GM12878 (cell line): ENCODE measurements at regions of chr5 and their contacts with region 1.

Region 1: GRCh38 chr5:95620870-95621837 is 1.3 kb downstream of the GPR150 start:
- DNase-seq: no peak
- ATAC-seq: peak; percentile 61
- H3K4me3 ChIP-seq: peak overlapping the region; percentile 62; the same call in 1 of the 2 replicates
- H3K27ac ChIP-seq: peak overlapping the region; percentile 21; the same call in 1 of the 2 replicates
- H3K4me1 ChIP-seq: peaks cover 19% of the 10 kb centered on the region
- H3K27me3 ChIP-seq: peaks cover 0 to 2% of the 10 kb centered on the region in 2 experiments; a peak in 1 of 4 replicates
- CTCF ChIP-seq: 0 out of 6 replicates have a peak, but pooled peaks of 1 of the 3 experiments have one; percentile 6
- EP300 ChIP-seq: no peak
- POLR2A ChIP-seq: no peak; the same call in 1 of the 2 replicates
- RAD21 ChIP-seq: no peak

Region 2: DNA sequence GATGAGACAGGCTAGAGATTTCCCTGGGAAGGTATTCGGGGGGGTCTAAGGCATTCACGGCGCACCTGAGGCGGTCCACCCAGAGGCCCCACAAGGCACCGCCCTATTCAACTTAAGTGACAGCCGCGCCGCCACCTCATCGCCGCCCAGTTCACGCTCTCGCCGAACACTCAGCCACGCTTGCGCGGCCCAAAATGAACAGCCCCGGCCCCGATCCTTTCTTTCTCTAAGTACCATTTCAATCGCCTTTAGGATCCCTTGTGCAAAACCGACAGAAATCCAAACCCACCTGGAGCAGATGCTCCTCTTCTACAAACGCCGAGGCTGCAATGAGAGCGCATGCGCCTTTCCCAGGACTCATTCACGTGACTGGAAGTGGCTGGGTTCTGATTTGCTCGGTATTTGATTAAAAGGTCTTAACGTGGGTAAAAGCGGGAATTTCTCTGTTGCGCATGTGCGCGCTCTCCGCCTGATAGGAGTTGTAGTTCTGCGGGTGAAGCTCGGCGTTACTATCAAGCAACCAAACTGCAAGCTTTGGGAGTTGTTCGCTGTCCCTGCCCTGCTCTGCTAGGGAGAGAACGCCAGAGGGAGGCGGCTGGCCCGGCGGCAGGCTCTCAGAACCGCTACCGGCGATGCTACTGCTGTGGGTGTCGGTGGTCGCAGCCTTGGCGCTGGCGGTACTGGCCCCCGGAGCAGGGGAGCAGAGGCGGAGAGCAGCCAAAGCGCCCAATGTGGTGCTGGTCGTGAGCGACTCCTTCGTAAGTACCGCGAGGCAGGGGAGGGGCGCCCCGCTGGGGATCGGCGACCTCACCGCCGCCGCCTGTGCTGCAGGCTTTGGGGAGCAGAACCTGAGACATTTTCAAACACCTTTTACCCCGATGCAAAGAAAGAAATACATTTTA is 66.3 kb before region 1 on chr5 and contains the starts of genes ARSK and SKIC3:
- CTCF ChIA-PET with region 1: no interaction called
- POLR2A ChIA-PET with region 1: no interaction called
- RAD21 ChIA-PET with region 1: no interaction called
- SMC1A ChIA-PET with region 1: interaction called, 3 read pairs
- in situ Hi-C with region 1: no loop called
- intact Hi-C with region 1: loop called (anchors 1 kb)
- DNase-seq: peak; percentile 99
- ATAC-seq: peak; percentile 94
- H3K4me3 ChIP-seq: peak within 1 kb of the TSS; percentile 87
- H3K27ac ChIP-seq: peak within 1 kb of the TSS; percentile 80
- H3K4me1 ChIP-seq: peaks cover 4% of the 10 kb centered on the region; the same call in 1 of the 2 replicates
- H3K27me3 ChIP-seq: no peaks in the 10 kb centered on the region
- CTCF ChIP-seq: peak in 2 of 3 experiments; percentile 27 to 33; a peak in 4 of 6 replicates
- EP300 ChIP-seq: no peak
- POLR2A ChIP-seq: peak; percentile 91
- RAD21 ChIP-seq: no peak
- polyA plus RNA-seq, gene ARSK: 1.6 to 3.5 TPM
- polyA plus RNA-seq, gene SKIC3: 23.6 to 42.1 TPM

Region 3: GRCh38 chr5:95631991-95632675 is 11.0 kb after region 1 on chr5:
- CTCF ChIA-PET with region 1: interaction called, 7 read pairs
- POLR2A ChIA-PET with region 1: no interaction called
- RAD21 ChIA-PET with region 1: no interaction called
- SMC1A ChIA-PET with region 1: interaction called, 14 read pairs
- in situ Hi-C with region 1: no loop called
- intact Hi-C with region 1: no loop called
- DNase-seq: no peak
- ATAC-seq: peak; percentile 98
- H3K4me3 ChIP-seq: no peak overlapping the region
- H3K27ac ChIP-seq: no peak overlapping the region
- H3K4me1 ChIP-seq: peaks cover 8% of the 10 kb centered on the region; the same call in 1 of the 2 replicates
- H3K27me3 ChIP-seq: no peaks in the 10 kb centered on the region
- CTCF ChIP-seq: no peak
- EP300 ChIP-seq: no peak
- POLR2A ChIP-seq: peak; percentile 61
- RAD21 ChIP-seq: no peak